Ascending aorta (tissue), 2 donors: ENCODE measurements at regions of chrX and their contacts with region 1.

Region 1: DNA sequence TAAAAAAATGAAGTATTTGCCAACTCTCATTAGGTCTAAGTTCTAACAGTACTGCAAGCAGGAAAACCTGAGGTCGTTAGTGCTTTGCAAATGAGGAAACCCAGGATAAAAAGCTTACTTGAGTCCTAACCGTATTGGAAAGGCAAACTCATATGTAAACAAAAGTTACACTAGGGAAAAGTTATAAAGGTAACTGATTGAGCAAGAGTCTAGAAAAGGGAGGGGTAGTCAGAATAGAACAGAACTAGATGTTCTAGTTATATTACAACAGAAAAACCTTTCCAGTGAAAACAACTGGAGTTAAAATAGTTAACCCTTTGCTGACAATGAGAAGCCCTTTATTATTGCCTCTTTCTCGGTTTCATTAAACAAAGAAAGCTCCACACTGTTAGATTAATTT is 66.4 kb upstream of the MAOA start:
- DNase-seq: no peak
- H3K4me3 ChIP-seq: peak overlapping the region in 1 of 2 donors; percentile 6
- H3K27ac ChIP-seq: peak overlapping the region; percentile 64 to 71
- H3K4me1 ChIP-seq: peaks cover 0 to 3% of the 10 kb centered on the region in 2 donors
- H3K27me3 ChIP-seq: no peaks in the 10 kb centered on the region
- CTCF ChIP-seq: no peak

Region 2: GRCh38 chrX:42955349-42955748 is 634.4 kb before region 1 on chrX:
- intact Hi-C with region 1: no loop called
- DNase-seq: no peak
- H3K4me3 ChIP-seq: no peak overlapping the region
- H3K27ac ChIP-seq: no peak overlapping the region
- H3K4me1 ChIP-seq: no peaks in the 10 kb centered on the region
- H3K27me3 ChIP-seq: no peaks in the 10 kb centered on the region
- CTCF ChIP-seq: no peak

Region 3: DNA sequence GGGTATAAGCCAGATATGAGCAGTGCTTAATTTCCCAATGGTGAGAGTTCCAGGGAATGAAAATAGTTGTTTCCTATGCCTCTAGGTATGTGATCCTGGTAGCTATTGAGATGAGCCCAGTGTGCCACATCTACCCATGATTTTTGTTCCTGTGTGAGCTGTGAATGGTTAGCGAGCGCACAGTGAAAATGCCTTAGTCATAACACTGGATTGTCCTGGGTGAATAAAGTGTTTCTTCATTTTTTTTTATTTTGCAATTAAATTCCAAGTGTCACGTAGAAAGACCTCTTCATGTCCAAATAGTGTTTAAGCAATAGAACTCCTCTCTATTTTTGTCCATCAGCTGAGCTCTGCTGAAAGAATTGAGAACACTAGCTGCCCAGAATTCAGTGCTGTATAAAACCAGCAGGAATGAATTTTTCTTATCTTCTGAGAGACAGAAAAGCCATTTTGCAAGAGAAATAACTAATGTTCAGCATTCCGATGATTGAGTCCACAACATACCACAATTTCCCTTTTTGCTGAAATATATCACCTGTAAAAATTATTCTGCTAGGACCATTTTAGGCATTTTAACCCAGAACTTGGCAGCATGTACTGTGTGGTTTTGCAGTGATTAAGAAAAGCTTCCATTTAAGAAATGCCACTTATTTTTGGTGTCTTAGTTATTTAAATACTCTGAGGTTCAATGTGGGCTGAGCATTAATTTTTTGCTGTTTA is 71.9 kb after region 1 on chrX:
- intact Hi-C with region 1: loop called (anchors 2 kb)
- DNase-seq: no peak
- H3K4me3 ChIP-seq: peak overlapping the region in 1 of 2 donors; percentile 28
- H3K27ac ChIP-seq: peak overlapping the region; percentile 4 to 65
- H3K4me1 ChIP-seq: peaks cover 0 to 4% of the 10 kb centered on the region in 2 donors
- H3K27me3 ChIP-seq: no peaks in the 10 kb centered on the region
- CTCF ChIP-seq: no peak

Region 4: GRCh38 chrX:43703211-43703791 is 113.6 kb after region 1 on chrX:
- intact Hi-C with region 1: loop called (anchors 5 kb)
- DNase-seq: no peak
- H3K4me3 ChIP-seq: no peak overlapping the region
- H3K27ac ChIP-seq: peak overlapping the region; percentile 65 to 76
- H3K4me1 ChIP-seq: peaks cover 0 to 32% of the 10 kb centered on the region in 2 donors
- H3K27me3 ChIP-seq: no peaks in the 10 kb centered on the region
- CTCF ChIP-seq: no peak

Region 5: DNA sequence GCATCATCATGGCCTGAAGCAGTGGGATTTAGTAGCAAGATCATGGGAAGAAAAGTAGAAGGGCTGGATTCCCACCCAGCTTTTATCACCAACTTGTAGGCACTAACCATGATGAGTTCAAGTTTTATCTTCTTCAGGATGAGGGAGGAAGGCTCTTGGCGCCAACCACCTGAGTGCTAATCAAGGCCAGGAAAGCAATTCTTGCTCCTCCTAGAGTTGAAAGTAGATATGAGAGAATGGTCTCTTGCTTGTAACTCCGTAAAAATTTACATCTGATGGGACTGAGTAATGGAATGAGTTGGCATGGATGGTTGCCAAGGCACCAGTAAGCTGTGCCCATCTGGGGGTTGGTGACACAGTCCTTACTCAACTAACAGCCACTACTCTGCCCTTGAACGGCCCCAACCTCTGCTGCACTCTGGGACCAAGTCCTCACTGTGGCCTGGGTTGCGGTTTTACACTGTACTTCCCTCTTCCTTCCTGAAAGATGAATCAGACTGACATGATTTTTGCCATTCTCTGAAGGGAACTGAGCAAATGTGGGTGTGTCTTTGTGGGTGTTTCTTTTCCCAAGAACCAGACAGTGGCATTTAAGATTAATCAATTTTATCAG is 422.9 kb after region 1 on chrX:
- intact Hi-C with region 1: no loop called
- DNase-seq: peak; percentile 9 to 75
- H3K4me3 ChIP-seq: no peak overlapping the region
- H3K27ac ChIP-seq: no peak overlapping the region
- H3K4me1 ChIP-seq: no peaks in the 10 kb centered on the region
- H3K27me3 ChIP-seq: no peaks in the 10 kb centered on the region
- CTCF ChIP-seq: no peak